ENCODE measurements at regions of chr19 and their contacts with region 1.

Region 1: DNA sequence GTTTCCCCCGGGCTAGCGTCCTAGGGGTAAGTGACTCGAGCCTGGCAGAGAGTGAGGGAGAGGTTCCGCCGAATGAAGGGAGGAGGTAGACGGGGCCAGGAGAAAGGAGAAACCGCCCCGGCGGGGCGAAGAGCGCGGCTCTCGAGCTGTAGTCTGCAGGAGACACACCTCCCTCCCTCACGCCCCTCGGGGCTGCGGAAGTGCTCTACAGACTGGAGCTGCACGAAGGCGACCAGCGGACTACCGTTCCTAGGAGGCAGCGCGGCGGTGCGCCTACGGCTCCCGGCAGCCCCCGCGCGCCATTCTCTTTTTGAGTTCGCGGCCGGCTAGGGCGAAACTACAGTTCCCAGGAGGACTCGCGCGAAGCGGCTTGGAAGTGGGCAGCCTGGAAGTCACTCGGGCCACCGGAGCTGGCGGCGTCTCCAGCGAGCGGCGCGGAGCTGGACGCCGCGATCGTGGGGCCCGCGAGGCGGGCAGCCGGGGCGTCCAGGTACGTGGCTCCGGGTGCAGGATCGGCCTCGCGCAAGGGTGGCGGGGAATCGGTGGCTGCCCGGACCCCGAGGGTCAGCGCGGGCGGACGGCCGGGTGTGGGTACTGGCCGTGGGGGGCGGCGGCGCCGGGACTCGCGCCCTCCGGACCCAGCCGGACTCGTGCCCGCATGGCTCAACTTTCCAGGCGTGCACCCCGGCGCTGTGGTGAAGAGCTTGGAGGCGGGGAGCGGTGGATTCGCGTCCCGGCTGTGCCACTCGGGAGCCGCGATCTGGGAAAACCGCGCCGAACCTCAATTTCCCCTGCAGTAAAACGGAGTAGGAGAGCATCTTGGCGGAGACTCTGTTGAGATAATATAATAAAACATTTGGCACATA is at the start of gene SIPA1L3:
- DNase-seq: peak; percentile 94
- H3K4me3 ChIP-seq: peak within 1 kb of the TSS; percentile 77 to 97
- H3K27ac ChIP-seq: peak within 1 kb of the TSS; percentile 78 to 94
- H3K4me1 ChIP-seq: peaks cover 4 to 16% of the 10 kb centered on the region in 2 experiments; a peak in 1 of 4 replicates
- H3K27me3 ChIP-seq: no peaks in the 10 kb centered on the region
- CTCF ChIP-seq: no peak
- EP300 ChIP-seq: no peak
- RAD21 ChIP-seq: no peak
- polyA plus RNA-seq, gene SIPA1L3: 6.7 and 11.6 TPM in 2 replicates

Region 2: DNA sequence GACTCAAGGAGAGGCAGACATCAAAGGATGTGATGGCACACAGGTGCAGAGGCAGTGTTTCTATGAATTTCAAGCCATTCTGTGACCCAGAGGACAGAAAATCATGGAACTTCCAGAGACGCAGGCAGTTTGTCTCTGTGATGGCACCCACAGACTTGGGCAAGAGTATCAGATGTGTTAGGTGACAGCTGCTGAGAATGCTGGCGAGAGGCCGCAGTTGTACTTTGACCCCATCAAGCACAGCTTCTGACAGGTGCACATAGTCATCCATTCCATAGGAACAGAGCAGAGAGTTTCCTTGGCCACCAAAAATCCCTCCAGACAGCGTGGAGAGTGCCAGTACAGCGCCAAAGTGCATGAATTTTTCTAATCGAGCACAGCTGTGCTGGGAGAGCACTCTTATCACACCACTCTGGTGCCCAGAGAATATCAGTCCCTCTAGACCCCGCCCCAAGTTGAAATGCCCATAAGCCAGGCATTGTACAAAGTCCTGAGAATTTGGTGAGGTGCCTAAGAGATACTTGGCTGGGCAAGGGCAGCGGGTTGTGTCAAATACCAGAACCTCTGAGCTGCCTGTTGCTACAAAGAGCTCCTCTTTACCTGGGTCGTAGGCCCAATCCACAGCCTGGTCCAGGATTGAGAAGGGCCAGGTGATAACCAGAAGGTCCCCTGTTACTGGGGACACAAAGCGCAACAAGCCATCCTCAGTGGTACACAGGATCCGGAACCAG is 13.1 kb before region 1 on chr19:
- CTCF ChIA-PET with region 1: interaction called, 19 read pairs
- POLR2A ChIA-PET with region 1: no interaction called
- DNase-seq: no peak
- H3K4me3 ChIP-seq: no peak overlapping the region
- H3K27ac ChIP-seq: no peak overlapping the region
- H3K4me1 ChIP-seq: no peaks in the 10 kb centered on the region
- H3K27me3 ChIP-seq: peaks cover 13% of the 10 kb centered on the region; the same call in 1 of the 2 replicates
- CTCF ChIP-seq: no peak
- EP300 ChIP-seq: no peak
- RAD21 ChIP-seq: no peak

Region 3: GRCh38 chr19:37966662-37967231 is 59.6 kb after region 1 on chr19:
- CTCF ChIA-PET with region 1: no interaction called
- POLR2A ChIA-PET with region 1: no interaction called
- DNase-seq: no peak
- H3K4me3 ChIP-seq: no peak overlapping the region
- H3K27ac ChIP-seq: peak overlapping the region in 1 of 2 experiments; percentile 30; a peak in 1 of 4 replicates
- H3K4me1 ChIP-seq: peaks cover 5 to 14% of the 10 kb centered on the region in 2 experiments; a peak in 2 of 4 replicates
- H3K27me3 ChIP-seq: no peaks in the 10 kb centered on the region
- CTCF ChIP-seq: no peak
- EP300 ChIP-seq: no peak
- RAD21 ChIP-seq: no peak

Region 4: DNA sequence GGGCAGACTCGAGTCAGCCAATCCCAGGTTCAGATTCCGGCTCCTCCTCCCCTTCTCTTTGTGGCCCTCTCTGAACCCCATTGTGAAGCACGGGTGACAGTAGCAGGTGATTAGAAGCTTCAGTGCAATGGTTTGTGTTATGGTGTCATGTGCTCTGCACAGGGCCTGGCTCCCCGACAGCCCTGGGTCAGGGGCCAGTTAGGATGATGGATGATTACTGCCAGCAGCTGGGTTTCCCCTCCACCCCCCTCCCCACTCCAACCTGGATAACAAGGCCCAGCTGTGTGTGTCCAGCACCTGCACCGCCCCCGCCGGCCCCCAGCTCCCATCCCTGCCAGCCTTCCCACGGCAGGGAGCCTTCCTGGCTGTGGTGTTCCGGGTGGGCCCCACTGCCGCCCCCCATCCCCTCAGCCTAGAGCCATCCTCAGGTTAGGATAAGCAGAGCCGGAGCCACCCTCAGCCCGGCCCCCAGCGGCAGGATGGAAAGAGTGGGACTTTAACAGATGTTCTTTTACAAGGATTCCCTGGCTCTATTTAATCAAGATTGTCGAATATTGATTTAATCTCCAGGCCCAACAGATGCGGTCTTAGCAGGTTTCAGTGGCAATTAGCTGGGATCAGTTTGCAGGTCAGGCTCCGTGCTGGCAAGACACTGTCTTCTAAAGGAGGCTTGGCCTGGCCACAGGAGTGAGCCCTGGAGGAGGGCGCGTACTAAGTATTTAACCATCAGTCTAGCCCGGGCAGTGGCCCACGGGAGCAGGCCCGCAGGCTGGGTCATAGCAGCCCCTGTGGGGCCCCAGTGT is 156.1 kb after region 1 on chr19:
- CTCF ChIA-PET with region 1: interaction called, 13 read pairs
- POLR2A ChIA-PET with region 1: interaction called, 4 read pairs
- DNase-seq: peak; percentile 87
- H3K4me3 ChIP-seq: no peak overlapping the region
- H3K27ac ChIP-seq: peak overlapping the region in 1 of 2 experiments; percentile 67; a peak in 2 of 4 replicates
- H3K4me1 ChIP-seq: peaks cover 0 to 33% of the 10 kb centered on the region in 2 experiments; a peak in 1 of 4 replicates
- H3K27me3 ChIP-seq: no peaks in the 10 kb centered on the region
- CTCF ChIP-seq: no peak
- EP300 ChIP-seq: peak in 1 of 2 experiments; percentile 82; a peak in 2 of 4 replicates
- RAD21 ChIP-seq: peak; percentile 30

Region 5: DNA sequence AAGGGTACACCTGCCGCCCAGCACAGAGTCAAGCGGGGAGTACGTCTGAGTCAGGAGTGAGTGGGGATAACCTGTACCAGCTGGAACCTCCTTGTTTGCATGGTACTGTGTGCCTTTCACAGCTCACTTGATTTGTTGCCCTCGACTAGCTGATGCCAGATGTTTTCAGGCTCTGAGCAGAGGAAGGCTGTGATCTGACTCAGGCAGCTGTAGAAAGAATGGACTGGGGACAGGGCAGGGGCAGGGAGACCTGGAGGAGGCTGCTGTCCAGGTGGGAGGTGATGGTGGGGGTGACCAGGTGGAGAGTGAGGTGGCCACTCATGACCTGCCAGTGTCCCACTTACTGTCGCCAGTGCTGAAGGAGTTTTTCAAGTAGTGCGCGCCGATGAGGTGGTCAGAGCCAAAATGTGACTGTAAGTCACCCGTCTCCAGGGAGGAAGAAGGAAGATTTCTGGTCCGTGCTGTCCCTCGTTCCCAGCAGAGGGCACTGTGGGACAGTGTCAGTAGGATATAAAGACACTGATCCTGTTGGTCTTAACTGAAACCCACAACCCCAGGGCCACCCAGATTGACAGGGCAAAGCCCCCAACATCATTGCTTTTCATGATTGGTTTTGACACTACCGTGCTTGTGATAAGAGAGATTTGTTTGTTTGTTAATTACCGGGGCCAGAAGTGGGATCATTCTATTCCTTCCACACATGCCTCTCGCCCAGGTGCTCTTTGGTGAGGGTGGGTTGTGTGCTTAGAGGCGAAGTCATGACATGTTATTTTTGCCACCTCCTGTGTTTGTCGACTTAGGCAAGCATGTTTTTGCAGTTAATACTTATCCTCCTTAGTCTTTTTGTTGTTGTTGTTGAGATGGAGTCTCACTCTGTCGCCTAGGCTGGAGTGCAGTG is 188.6 kb after region 1 on chr19:
- CTCF ChIA-PET with region 1: interaction called, 29 read pairs
- POLR2A ChIA-PET with region 1: interaction called, 8 read pairs
- DNase-seq: peak; percentile 74
- H3K4me3 ChIP-seq: no peak overlapping the region; a peak in 1 of 4 replicates
- H3K27ac ChIP-seq: no peak overlapping the region
- H3K4me1 ChIP-seq: peaks cover 0 to 20% of the 10 kb centered on the region in 2 experiments; a peak in 1 of 4 replicates
- H3K27me3 ChIP-seq: no peaks in the 10 kb centered on the region
- CTCF ChIP-seq: peak; percentile 75
- EP300 ChIP-seq: no peak
- RAD21 ChIP-seq: peak; percentile 65

Region 6: DNA sequence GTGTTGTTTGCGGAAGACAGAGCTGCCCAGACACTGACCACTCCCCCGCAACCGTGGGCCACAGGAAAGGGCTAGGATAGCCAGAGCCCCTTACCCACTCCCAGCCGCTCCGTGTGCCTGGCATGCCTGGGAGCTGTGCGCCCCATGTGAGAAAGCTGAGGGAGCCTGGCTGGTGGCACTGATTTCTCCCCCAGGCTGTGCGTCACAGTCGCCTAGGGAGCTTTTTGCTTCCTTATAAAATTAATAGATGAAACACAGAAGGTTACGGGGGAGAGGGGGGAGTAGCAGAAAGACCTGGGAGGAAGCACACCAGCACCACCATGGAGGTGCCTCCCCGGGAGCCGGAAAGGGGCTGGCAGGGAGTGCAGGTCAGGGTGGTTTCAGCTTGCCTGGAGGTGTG is 292.2 kb after region 1 on chr19:
- CTCF ChIA-PET with region 1: interaction called, 11 read pairs
- POLR2A ChIA-PET with region 1: no interaction called
- DNase-seq: no peak
- H3K4me3 ChIP-seq: no peak overlapping the region
- H3K27ac ChIP-seq: no peak overlapping the region
- H3K4me1 ChIP-seq: no peaks in the 10 kb centered on the region; a peak in 1 of 4 replicates
- H3K27me3 ChIP-seq: no peaks in the 10 kb centered on the region
- CTCF ChIP-seq: no peak
- EP300 ChIP-seq: no peak
- RAD21 ChIP-seq: no peak

Region 7: DNA sequence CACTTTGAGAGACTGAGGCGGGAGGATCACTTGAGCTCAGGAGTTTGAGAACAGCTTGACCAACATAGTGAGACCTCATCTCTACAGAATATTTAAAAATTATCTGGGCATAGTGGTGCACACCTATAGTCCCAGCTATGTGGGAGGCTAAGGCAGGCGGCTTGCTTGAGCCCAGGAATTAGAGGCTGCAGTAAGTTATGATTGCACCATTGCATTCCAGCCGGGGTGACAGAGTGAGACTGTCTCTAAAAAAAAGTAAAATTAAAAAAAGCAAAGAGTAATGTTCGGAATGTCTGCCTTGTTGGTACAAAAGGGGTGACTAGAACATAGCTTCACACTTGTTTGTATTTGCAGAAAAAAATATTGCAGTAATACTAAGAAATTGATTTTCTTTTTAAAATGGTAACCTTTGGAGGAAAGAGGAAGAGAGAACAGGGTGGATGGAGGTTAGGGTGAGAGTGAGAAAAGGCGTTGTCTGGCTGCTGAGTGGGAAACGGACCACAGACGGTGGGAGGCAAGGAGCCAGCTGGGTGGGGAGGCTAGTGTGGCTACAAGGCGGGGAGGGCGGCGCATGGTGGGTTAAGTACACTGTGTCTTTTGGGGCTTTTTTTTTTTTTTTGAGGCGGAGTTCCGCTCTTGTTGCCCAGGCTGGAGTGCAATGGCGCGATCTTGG is 338.9 kb after region 1 on chr19:
- CTCF ChIA-PET with region 1: interaction called, 16 read pairs
- POLR2A ChIA-PET with region 1: no interaction called
- DNase-seq: no peak
- H3K4me3 ChIP-seq: no peak overlapping the region
- H3K27ac ChIP-seq: no peak overlapping the region
- H3K4me1 ChIP-seq: peaks cover 0 to 1% of the 10 kb centered on the region in 2 experiments; a peak in 1 of 4 replicates
- H3K27me3 ChIP-seq: no peaks in the 10 kb centered on the region
- CTCF ChIP-seq: no peak
- EP300 ChIP-seq: no peak
- RAD21 ChIP-seq: no peak

Measured in SK-N-SH (cell line).